Activated B cell treated with CpG ODN at 0.5 μM for 24 hours (primary cell): ENCODE measurements at regions of chr9 and their contacts with region 1.

Region 1: GRCh38 chr9:115204904-115205453 is 87.0 kb upstream of the TNC start:
- DNase-seq: no peak
- ATAC-seq: peak; percentile 62
- H3K4me3 Mint-ChIP-seq: no peak overlapping the region
- H3K27ac Mint-ChIP-seq: peak overlapping the region; percentile 61
- H3K4me1 Mint-ChIP-seq: peaks cover 48% of the 10 kb centered on the region
- H3K27me3 Mint-ChIP-seq: no peaks in the 10 kb centered on the region
- CTCF ChIP-seq: no peak

Region 2: GRCh38 chr9:114696814-114697544 is 508.0 kb before region 1 on chr9:
- CTCF ChIA-PET with region 1: no interaction called
- POLR2A ChIA-PET with region 1: no interaction called
- intact Hi-C with region 1: loop called (anchors 5 kb)
- DNase-seq: no peak
- ATAC-seq: peak; percentile 59
- H3K4me3 Mint-ChIP-seq: peak overlapping the region; percentile 28
- H3K27ac Mint-ChIP-seq: peak overlapping the region; percentile 81
- H3K4me1 Mint-ChIP-seq: peaks cover 20% of the 10 kb centered on the region
- H3K27me3 Mint-ChIP-seq: peaks cover 13% of the 10 kb centered on the region
- CTCF ChIP-seq: no peak

Region 3: DNA sequence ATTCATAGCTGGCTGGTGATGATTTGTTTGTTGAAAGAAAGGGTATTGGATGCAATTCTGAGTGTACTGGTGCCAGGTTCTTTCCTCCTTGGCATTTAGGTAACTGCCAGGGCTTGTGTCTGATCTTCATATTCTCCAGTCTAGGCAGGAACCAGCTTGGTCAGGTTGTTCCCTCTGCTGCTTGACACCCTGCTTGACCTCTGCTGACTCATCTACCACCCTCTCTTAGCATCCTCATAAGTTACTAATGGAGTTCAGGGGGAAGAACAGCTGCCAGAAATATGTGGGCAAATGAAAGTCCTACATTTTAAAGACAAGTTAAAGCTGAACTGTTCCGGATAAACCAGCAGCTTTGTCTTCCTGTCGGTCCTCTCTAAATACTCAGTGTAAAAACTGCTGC is 29.1 kb after region 1 on chr9:
- CTCF ChIA-PET with region 1: no interaction called
- POLR2A ChIA-PET with region 1: no interaction called
- intact Hi-C with region 1: no loop called
- DNase-seq: no peak
- ATAC-seq: no peak
- H3K4me3 Mint-ChIP-seq: no peak overlapping the region
- H3K27ac Mint-ChIP-seq: no peak overlapping the region
- H3K4me1 Mint-ChIP-seq: peaks cover 6% of the 10 kb centered on the region
- H3K27me3 Mint-ChIP-seq: peaks cover 3% of the 10 kb centered on the region
- CTCF ChIP-seq: no peak

Region 4: GRCh38 chr9:115262477-115262876 is 57.5 kb after region 1 on chr9:
- CTCF ChIA-PET with region 1: no interaction called
- POLR2A ChIA-PET with region 1: no interaction called
- intact Hi-C with region 1: no loop called
- DNase-seq: no peak
- ATAC-seq: no peak
- H3K4me3 Mint-ChIP-seq: no peak overlapping the region
- H3K27ac Mint-ChIP-seq: no peak overlapping the region
- H3K4me1 Mint-ChIP-seq: no peaks in the 10 kb centered on the region
- H3K27me3 Mint-ChIP-seq: no peaks in the 10 kb centered on the region
- CTCF ChIP-seq: no peak

Region 5: DNA sequence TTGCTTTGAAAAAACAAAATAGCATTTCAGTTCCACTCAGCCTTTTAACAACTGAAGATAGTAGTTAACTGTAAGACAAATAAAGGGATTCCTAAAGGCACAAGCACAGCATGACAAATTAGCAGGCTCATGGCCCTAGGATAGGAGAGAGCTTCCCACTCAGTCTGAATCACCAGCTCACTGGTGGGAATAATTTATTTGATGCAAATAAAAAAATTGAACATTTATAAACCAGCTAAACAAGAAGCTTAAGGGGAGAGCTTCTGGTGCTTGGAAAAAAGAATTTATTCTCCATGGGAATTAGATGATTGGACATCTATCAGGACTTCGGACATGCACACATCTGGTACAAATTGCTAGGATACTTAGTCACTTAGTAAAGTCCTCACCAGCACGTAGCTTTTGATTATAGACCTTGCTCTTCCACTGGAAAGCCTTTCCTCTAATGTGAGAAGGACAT is 207.0 kb after region 1 on chr9:
- CTCF ChIA-PET with region 1: no interaction called
- POLR2A ChIA-PET with region 1: no interaction called
- intact Hi-C with region 1: loop called (anchors 10 kb)
- DNase-seq: no peak
- ATAC-seq: no peak
- H3K4me3 Mint-ChIP-seq: no peak overlapping the region
- H3K27ac Mint-ChIP-seq: no peak overlapping the region
- H3K4me1 Mint-ChIP-seq: peaks cover 14% of the 10 kb centered on the region
- H3K27me3 Mint-ChIP-seq: no peaks in the 10 kb centered on the region
- CTCF ChIP-seq: no peak